Posterior vena cava (tissue), 2 donors: ENCODE measurements at regions of chr15 and their contacts with region 1.

Region 1: GRCh38 chr15:47778263-47778770 is 61.0 kb downstream of the SEMA6D start:
- DNase-seq: no peak

Region 2: DNA sequence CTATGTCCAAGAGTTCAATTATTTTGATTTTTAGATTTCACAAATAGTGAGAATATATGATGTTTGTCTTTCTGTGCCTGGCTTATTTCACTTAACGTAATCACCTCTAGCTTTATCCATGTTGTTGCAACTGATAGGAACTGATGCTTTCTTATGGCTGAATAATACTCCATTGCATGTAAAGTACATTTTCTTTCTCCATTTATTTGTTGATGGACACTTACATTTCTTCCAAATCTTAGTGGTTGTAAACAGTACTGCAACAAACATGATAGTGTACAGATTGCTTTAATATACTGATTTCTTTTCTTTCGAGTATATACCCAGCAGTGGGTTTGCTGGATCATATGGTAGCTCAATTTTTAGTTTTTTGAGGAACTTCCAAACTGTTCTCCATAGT is 661.6 kb before region 1 on chr15:
- intact Hi-C with region 1: loop called in 1 of 2 experiments (anchors 5 kb)
- DNase-seq: no peak

Region 3: DNA sequence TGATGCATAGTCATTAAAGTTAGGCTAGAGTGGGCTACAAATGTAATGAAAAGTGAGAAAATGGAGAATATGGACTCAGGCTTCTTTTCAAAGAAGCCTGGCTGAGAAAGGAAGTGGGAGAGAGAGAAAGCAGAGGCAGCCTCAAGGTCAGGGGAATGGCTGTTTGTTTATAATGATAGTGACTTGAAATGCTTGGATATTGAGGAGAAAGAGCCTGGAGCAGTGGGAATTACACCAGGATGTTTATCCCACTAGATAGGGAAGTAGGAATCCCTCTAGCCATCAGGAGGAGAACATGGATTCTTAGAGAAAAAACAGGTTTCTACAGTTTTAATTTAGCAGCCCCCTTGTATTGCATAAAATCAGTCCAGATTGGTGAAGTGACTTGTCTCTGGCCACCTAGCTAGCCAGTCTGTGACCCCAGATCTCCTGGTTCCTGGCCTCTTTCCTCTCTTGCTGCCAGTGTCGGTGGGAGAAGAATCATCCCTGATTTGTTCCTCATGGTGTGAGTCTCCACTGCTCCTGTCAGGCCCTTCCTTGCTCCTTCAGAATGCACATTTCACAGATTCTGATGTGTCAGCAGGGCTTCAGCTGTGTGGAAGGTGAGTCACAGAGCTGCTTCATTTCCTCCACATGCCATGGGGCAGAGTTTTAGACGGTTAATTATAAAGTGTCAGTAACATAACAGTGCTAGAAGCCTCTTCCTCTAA is 28.1 kb before region 1 on chr15:
- intact Hi-C with region 1: no loop called
- DNase-seq: no peak

Region 4: GRCh38 chr15:48038221-48038620 is 259.9 kb after region 1 on chr15:
- intact Hi-C with region 1: loop called in 1 of 2 experiments (anchors 2 kb)
- DNase-seq: no peak